Cardiac septum (tissue), 1 donor: ENCODE measurements at regions of chr3 and their contacts with region 1.

Region 1: DNA sequence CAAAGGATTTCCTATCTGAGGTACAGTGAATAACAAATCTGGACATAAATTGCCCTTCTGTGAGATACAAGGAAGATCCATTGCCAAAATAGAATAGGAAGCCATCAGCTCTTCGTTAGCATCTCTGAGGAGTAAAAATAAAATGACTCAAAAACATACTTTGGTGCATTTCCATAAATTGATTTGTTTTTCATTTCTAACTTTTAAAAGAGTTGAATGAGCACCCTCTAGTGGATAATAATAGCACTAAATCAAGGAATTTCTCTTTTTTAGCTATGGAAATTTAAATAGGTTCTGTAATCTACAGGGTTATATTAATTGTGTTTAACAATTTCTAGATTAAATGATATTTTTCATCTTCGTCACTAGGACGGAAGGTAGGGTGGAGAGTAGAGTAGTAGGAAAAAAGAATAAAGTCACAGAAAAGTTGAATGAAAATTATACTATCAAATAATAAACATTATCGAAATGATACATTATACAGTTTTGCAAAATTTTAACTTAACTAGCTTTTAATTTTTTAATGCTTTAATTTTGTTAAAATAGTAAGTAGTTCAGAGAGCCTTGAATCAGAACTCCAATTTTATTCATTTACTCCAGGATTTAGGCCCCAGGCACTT is 6.4 kb downstream of the NSUN3 start:
- DNase-seq: no peak

Region 2: GRCh38 chr3:93906245-93906644 is 163.1 kb before region 1 on chr3:
- intact Hi-C with region 1: loop called (anchors 1 kb)
- DNase-seq: no peak

Region 3: GRCh38 chr3:93961489-93961888 is 107.8 kb before region 1 on chr3:
- intact Hi-C with region 1: no loop called
- DNase-seq: no peak

Region 4: GRCh38 chr3:94004301-94004910 is 64.9 kb before region 1 on chr3:
- intact Hi-C with region 1: loop called (anchors 2 kb)
- DNase-seq: no peak

Region 5: GRCh38 chr3:94127115-94127514 is 57.8 kb after region 1 on chr3:
- intact Hi-C with region 1: no loop called
- DNase-seq: no peak